Gastrocnemius medialis (tissue), 4 donors: ENCODE measurements at regions of chr7 and their contacts with region 1.

Region 1: DNA sequence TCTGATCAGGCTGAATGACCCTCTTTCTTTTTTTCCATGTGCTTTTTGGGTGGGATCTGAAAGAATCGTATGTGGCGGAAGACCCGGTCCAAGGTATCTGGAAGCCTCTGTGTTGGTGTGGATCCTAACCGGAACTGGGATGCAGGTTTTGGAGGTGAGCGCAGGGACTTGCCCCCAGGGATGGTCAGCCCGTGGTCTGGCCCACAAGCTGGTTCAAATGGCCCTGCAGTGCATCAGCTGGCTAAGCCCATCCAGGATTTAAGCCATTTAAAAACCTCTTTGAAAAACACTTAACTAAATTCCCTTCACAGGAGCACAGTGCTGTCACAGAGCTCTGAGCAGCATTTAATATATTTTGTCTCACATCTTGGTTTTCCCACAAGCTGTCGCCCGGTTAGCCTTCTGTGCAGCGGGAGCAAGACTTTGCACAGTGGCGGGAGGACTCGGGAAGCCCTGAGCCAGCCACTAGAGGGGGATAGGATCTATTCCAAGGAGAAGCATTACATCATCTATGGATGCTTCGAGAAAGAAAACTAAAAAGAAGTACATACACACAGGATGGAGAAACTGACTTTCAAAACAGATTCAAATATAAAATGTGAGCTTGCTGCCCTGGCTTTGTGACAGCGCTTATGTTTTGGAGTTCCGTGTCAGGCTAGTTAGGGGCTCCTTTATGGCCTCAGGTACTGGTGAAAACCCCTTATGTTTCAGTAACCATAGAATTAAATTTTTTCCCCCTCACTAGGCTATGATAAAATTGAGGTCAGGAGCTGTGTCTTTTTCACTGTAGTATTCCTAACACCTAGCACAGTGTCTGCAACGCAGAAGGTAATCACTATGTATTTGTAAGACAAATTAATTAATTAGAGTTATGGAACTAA is 11.3 kb downstream of the CPA2 start:
- DNase-seq: peak in 1 of 2 donors; percentile 29
- ATAC-seq: peak; percentile 59 to 62
- H3K4me3 ChIP-seq: no peak overlapping the region
- H3K27ac ChIP-seq: no peak overlapping the region
- H3K4me1 ChIP-seq: peaks cover 3 to 13% of the 10 kb centered on the region in 2 donors
- H3K27me3 ChIP-seq: peaks cover 27 to 39% (median 34%) of the 10 kb centered on the region in 3 donors
- CTCF ChIP-seq: peak; percentile 21 to 54 (median 37)
- POLR2A ChIP-seq: no peak

Region 2: GRCh38 chr7:130352221-130353075 is 74.4 kb after region 1 on chr7:
- in situ Hi-C with region 1: no loop called
- intact Hi-C with region 1: loop called (anchors 5 kb)
- DNase-seq: no peak
- ATAC-seq: no peak
- H3K4me3 ChIP-seq: no peak overlapping the region
- H3K27ac ChIP-seq: peak overlapping the region; percentile 43 to 72 (median 64)
- H3K4me1 ChIP-seq: peaks cover 16 to 22% of the 10 kb centered on the region in 2 donors
- H3K27me3 ChIP-seq: peaks cover 0 to 10% (median 0%) of the 10 kb centered on the region in 3 donors
- CTCF ChIP-seq: no peak
- POLR2A ChIP-seq: no peak

Region 3: GRCh38 chr7:130440527-130441365 is 162.7 kb after region 1 on chr7 and contains the start of gene CEP41:
- in situ Hi-C with region 1: no loop called
- intact Hi-C with region 1: loop called (anchors 2 kb)
- DNase-seq: peak; percentile 90 to 92
- ATAC-seq: peak; percentile 99
- H3K4me3 ChIP-seq: peak within 1 kb of the TSS; percentile 76 to 99 (median 86)
- H3K27ac ChIP-seq: peak within 1 kb of the TSS; percentile 68 to 87 (median 85)
- H3K4me1 ChIP-seq: peaks cover 0 to 9% of the 10 kb centered on the region in 2 donors
- H3K27me3 ChIP-seq: no peaks in the 10 kb centered on the region
- CTCF ChIP-seq: no peak
- POLR2A ChIP-seq: no peak
- total RNA-seq, gene CEP41: 1.8 to 6.2 (median 1.9) TPM

Region 4: GRCh38 chr7:130486114-130486958 is 208.3 kb after region 1 on chr7:
- in situ Hi-C with region 1: no loop called
- intact Hi-C with region 1: loop called (anchors 5 kb)
- DNase-seq: no peak
- ATAC-seq: no peak
- H3K4me3 ChIP-seq: peak overlapping the region; percentile 31 to 50 (median 38)
- H3K27ac ChIP-seq: no peak overlapping the region
- H3K4me1 ChIP-seq: peaks cover under 1% of the 10 kb centered on the region in 2 donors
- H3K27me3 ChIP-seq: peaks cover 5 to 59% (median 24%) of the 10 kb centered on the region in 3 donors
- CTCF ChIP-seq: peak in 2 of 5 experiments; percentile 46 to 48
- POLR2A ChIP-seq: no peak

Region 5: GRCh38 chr7:131745390-131746248 is 1467.6 kb after region 1 on chr7:
- in situ Hi-C with region 1: no loop called
- intact Hi-C with region 1: no loop called
- DNase-seq: no peak
- ATAC-seq: no peak
- H3K4me3 ChIP-seq: no peak overlapping the region
- H3K27ac ChIP-seq: no peak overlapping the region
- H3K4me1 ChIP-seq: no peaks in the 10 kb centered on the region
- H3K27me3 ChIP-seq: no peaks in the 10 kb centered on the region
- CTCF ChIP-seq: no peak
- POLR2A ChIP-seq: no peak